ENCODE measurements at regions of chr7 and their contacts with region 1.

Region 1: GRCh38 chr7:132402751-132403245 is 173.5 kb downstream of the PLXNA4 start:
- DNase-seq: peak; percentile 84
- H3K4me3 ChIP-seq: no peak overlapping the region
- H3K27ac ChIP-seq: peak overlapping the region in 1 of 2 donors; percentile 64
- H3K4me1 ChIP-seq: peaks cover 44% of the 10 kb centered on the region
- H3K27me3 ChIP-seq: no peaks in the 10 kb centered on the region
- CTCF ChIP-seq: no peak
- POLR2A ChIP-seq: no peak

Region 2: GRCh38 chr7:132307465-132307864 is 95.3 kb before region 1 on chr7:
- intact Hi-C with region 1: no loop called
- DNase-seq: no peak
- H3K4me3 ChIP-seq: no peak overlapping the region
- H3K27ac ChIP-seq: no peak overlapping the region
- H3K4me1 ChIP-seq: no peaks in the 10 kb centered on the region
- H3K27me3 ChIP-seq: no peaks in the 10 kb centered on the region
- CTCF ChIP-seq: no peak
- POLR2A ChIP-seq: no peak

Region 3: DNA sequence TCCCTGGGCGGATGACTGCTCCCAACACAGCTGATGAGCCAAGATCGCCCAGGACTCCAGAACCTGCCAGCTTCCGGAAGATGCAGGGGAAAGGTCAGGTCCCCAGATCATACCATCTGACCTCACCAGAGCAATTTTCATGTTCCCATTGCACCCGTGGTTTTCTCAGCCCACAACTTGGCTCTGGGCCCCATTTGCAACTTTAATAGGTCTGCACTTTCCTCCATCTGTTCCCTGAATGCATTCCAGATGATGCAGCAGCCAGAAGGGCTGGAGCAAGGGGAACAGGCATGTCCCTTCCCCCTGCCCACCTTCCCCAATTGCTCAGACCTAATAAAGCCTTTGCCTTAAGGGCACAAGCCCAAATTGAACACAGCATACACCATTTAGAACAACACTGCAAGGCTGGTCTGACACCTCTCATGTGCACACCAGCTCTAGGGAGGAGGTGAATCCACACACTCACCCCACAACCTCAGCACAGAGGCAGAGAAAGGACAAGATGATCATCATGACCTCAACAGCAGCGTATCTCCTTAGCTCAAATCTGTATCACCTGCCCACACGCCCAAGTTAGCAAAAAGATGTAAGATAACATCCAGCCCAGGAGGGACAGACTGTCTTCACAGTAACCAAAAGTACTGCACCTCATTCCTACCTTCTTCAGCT is 86.0 kb after region 1 on chr7:
- intact Hi-C with region 1: loop called (anchors 10 kb)
- DNase-seq: peak; percentile 26
- H3K4me3 ChIP-seq: no peak overlapping the region
- H3K27ac ChIP-seq: no peak overlapping the region
- H3K4me1 ChIP-seq: peaks cover 3% of the 10 kb centered on the region
- H3K27me3 ChIP-seq: no peaks in the 10 kb centered on the region
- CTCF ChIP-seq: no peak
- POLR2A ChIP-seq: no peak

Region 4: GRCh38 chr7:132548489-132549078 is 145.8 kb after region 1 on chr7:
- intact Hi-C with region 1: no loop called
- DNase-seq: no peak
- H3K4me3 ChIP-seq: no peak overlapping the region
- H3K27ac ChIP-seq: no peak overlapping the region
- H3K4me1 ChIP-seq: no peaks in the 10 kb centered on the region
- H3K27me3 ChIP-seq: no peaks in the 10 kb centered on the region
- CTCF ChIP-seq: no peak
- POLR2A ChIP-seq: no peak